ENCODE measurements at regions of chr18 and their contacts with region 1.

Region 1: GRCh38 chr18:46281185-46282176 is 177.3 kb downstream of the HAUS1 start:
- DNase-seq: peak; percentile 22 to 52
- ATAC-seq: peak; percentile 58 to 83
- H3K4me3 ChIP-seq: no peak overlapping the region
- H3K27ac ChIP-seq: no peak overlapping the region
- H3K4me1 ChIP-seq: peaks cover 22 to 40% of the 10 kb centered on the region in 2 donors
- H3K27me3 ChIP-seq: no peaks in the 10 kb centered on the region
- CTCF ChIP-seq: peak; percentile 78 to 93 (median 83)
- POLR2A ChIP-seq: no peak

Region 2: DNA sequence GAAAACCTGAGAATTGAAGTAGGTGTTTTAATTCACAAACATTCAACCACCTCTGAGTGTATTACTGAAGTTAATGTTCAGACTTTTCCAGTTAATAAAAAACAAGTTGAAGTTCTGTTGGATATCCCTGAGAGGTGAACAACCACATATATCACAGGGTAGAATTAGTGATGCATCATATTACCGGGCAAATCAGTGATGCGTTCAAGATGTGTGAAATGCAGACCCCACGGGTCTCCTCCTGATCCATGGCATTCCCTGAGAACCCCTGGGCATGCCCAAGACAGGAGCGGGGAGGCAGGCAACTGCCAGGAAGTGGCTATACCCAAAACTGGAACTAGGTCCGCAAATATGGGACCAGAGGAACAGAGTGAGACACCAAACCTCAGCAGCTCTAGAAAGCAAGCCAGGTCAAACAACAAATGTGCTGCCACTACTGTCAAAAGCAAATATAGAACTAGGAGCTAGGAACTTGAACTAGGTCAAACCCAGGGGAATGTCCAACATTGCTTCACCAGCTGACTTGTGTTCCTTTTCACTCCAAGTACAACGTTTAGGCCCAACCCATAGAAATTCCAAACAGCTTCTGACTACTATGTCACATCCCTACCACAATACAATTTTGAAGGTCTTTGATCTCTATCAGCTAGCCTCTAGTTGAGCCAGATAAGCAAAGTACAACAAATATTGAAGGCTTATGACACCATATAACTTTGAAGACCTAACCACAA is 229.6 kb before region 1 on chr18:
- in situ Hi-C with region 1: no loop called
- intact Hi-C with region 1: no loop called
- DNase-seq: peak; percentile 51 to 65
- ATAC-seq: peak; percentile 99
- H3K4me3 ChIP-seq: peak overlapping the region in 2 of 4 donors; percentile 20 to 33
- H3K27ac ChIP-seq: peak overlapping the region; percentile 65 to 88 (median 74)
- H3K4me1 ChIP-seq: peaks cover 20 to 37% of the 10 kb centered on the region in 2 donors
- H3K27me3 ChIP-seq: no peaks in the 10 kb centered on the region
- CTCF ChIP-seq: no peak
- POLR2A ChIP-seq: no peak

Region 3: GRCh38 chr18:46333431-46334135 is 52.1 kb after region 1 on chr18:
- in situ Hi-C with region 1: no loop called
- intact Hi-C with region 1: loop called (anchors 5 kb)
- DNase-seq: no peak
- ATAC-seq: peak; percentile 47 to 49
- H3K4me3 ChIP-seq: peak overlapping the region; percentile 50 to 55 (median 54)
- H3K27ac ChIP-seq: no peak overlapping the region
- H3K4me1 ChIP-seq: peaks cover 0 to 4% of the 10 kb centered on the region in 2 donors
- H3K27me3 ChIP-seq: no peaks in the 10 kb centered on the region
- CTCF ChIP-seq: no peak
- POLR2A ChIP-seq: no peak

Region 4: DNA sequence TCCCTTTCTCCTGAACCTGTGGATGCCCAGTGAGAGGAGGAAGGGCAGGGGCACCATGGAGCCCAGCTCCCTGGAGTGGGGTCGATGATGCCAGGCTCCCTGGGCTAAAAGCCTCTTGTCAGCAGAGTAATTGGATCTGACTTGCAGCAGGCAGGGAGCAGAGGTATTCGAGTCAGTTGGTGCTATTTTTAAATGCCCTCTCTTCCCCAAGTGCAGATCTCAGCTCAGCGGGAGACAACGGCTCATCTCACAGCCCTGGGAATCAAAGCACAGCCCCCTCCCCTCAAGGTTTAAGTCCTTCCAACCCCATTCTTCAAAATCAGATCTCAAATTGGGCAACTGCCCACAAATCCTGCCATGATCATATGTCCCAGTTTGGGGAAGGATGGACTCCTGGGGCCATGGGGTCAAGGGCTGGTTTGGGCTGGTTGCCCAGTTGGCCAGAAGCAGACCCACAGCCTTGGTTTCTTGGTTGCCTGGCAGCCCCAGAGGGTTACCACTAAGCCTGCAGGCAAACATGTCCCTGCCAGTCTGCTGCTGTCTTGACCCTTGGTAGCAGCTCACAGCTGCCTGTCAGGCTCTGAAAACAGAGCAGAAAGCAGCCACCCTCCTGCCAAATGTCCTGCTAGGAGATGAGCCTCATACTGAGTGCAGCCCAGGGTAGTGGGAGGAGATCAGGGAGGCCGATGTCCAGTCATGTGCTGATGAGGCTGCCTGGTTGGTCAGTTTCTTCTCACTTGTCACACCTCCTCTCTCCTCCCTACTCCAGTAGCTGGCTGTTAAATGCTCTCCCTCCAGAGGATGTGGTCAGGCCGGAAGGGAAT is 130.6 kb after region 1 on chr18:
- in situ Hi-C with region 1: no loop called
- intact Hi-C with region 1: loop called (anchors 10 kb)
- DNase-seq: peak; percentile 74 to 94
- ATAC-seq: peak; percentile 82 to 84
- H3K4me3 ChIP-seq: peak overlapping the region in 1 of 4 donors; percentile 23
- H3K27ac ChIP-seq: peak overlapping the region; percentile 91 to 98 (median 96)
- H3K4me1 ChIP-seq: peaks cover 76 to 78% of the 10 kb centered on the region in 2 donors
- H3K27me3 ChIP-seq: no peaks in the 10 kb centered on the region
- CTCF ChIP-seq: no peak
- POLR2A ChIP-seq: peak in 1 of 2 donors; percentile 72

Region 5: GRCh38 chr18:46518438-46518837 is 237.0 kb after region 1 on chr18:
- in situ Hi-C with region 1: loop called in 1 of 4 experiments (anchors 25 kb)
- intact Hi-C with region 1: loop called (anchors 1 kb)
- DNase-seq: peak; percentile 12 to 54
- ATAC-seq: peak; percentile 83
- H3K4me3 ChIP-seq: no peak overlapping the region
- H3K27ac ChIP-seq: no peak overlapping the region
- H3K4me1 ChIP-seq: no peaks in the 10 kb centered on the region
- H3K27me3 ChIP-seq: no peaks in the 10 kb centered on the region
- CTCF ChIP-seq: peak; percentile 27 to 63 (median 51)
- POLR2A ChIP-seq: no peak